MCF 10A (cell line): ENCODE measurements at regions of chr17 and their contacts with region 1.

Region 1: DNA sequence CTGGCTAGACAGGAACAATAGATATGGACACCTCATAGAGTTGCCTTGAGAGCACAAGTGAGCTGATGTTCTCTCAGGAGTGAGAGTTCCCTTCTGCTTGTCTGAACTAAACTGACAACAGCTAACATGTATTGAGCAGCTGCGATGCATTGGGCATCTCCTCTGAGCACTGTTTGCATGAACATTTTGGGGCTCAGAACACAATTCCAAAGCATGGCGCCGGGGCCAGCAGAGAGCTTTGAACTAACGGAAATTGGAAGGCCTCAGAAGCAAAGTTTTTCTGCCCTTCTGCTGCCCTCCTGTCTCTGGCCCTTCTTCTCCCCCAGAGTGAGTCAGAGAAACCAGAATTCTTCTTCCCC is 38.1 kb downstream of the TRPV2 start:
- DNase-seq: no peak
- H3K4me3 Mint-ChIP-seq: no peak overlapping the region
- H3K27ac Mint-ChIP-seq: no peak overlapping the region
- H3K4me1 Mint-ChIP-seq: no peaks in the 10 kb centered on the region
- H3K27me3 Mint-ChIP-seq: no peaks in the 10 kb centered on the region
- CTCF ChIP-seq: no peak

Region 2: GRCh38 chr17:16463358-16464302 is 10.2 kb after region 1 on chr17:
- CTCF ChIA-PET with region 1: interaction called, 18 read pairs
- POLR2A ChIA-PET with region 1: no interaction called
- intact Hi-C with region 1: no loop called
- DNase-seq: peak; percentile 54
- H3K4me3 Mint-ChIP-seq: no peak overlapping the region
- H3K27ac Mint-ChIP-seq: no peak overlapping the region
- H3K4me1 Mint-ChIP-seq: peaks cover 7% of the 10 kb centered on the region
- H3K27me3 Mint-ChIP-seq: peaks cover 16% of the 10 kb centered on the region
- CTCF ChIP-seq: no peak

Region 3: DNA sequence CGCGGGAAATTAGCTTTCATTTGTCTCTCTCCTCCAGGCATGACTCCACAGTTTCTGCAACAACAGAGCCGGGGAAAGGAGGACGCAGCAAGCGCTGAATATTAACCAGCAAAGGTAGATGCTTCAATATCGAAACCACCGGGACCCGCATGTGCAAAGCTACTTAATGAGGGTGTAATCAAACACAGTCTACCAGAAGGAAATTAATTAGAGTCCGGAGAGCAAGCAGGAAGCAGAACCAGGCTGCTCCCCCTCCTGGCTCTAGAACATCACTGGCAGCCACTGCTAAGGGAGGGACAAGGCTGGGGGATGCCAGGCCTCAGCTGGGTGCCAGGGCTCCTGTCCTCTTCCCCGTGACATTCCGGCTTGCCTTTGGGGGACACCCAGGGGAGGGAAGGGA is 16.8 kb after region 1 on chr17:
- CTCF ChIA-PET with region 1: interaction called, 19 read pairs
- POLR2A ChIA-PET with region 1: interaction called, 3 read pairs
- intact Hi-C with region 1: no loop called
- DNase-seq: no peak
- H3K4me3 Mint-ChIP-seq: no peak overlapping the region
- H3K27ac Mint-ChIP-seq: no peak overlapping the region
- H3K4me1 Mint-ChIP-seq: no peaks in the 10 kb centered on the region
- H3K27me3 Mint-ChIP-seq: peaks cover 65% of the 10 kb centered on the region
- CTCF ChIP-seq: no peak

Region 4: DNA sequence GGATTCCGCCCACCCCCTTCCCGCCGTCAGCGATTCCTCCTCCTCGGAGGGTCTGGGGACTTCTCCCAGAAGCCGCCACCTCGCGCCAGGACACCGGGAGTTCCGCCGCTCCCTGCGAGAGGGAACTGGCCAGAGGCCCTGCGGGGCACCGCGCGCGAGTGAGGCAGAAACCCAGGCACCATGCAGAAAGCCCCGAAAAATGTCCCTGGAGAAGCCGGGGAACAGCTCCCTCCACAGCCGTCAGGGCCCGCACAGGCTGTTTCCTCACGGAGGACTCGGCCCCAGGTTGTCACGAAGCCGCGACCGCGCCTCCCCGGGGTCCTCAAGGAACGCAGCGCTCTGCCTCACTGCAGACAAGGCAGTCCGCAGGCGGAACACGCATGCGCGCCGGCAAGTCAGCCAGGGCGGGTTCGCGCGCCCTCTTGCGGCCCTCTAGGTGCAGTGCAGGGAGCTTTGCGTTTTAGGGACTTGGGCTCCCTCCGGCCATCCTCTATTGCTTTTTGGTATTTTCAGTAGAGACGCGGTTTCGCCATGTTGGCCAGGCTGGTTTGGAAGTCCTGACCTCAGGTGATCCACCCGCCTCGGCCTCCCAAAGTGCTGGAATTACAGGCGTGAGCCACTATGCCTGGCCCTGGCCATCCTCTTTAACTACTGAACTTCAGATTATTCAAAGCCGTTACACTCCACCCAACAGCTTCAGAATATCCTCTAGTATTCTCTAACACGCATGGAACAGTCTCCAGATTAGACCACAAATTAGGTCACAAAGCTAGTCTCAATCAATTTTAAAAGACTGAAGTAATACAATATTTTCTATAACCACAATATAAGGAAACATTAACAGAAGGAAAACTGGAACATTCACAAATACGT is 135.9 kb after region 1 on chr17:
- CTCF ChIA-PET with region 1: interaction called, 4 read pairs
- POLR2A ChIA-PET with region 1: no interaction called
- intact Hi-C with region 1: loop called (anchors 2 kb)
- DNase-seq: peak; percentile 87
- H3K4me3 Mint-ChIP-seq: peak overlapping the region; percentile 70
- H3K27ac Mint-ChIP-seq: peak overlapping the region; percentile 35
- H3K4me1 Mint-ChIP-seq: peaks cover 12% of the 10 kb centered on the region
- H3K27me3 Mint-ChIP-seq: no peaks in the 10 kb centered on the region
- CTCF ChIP-seq: peak; percentile 96